ENCODE measurements at regions of chr12 and their contacts with region 1.

Region 1: GRCh38 chr12:3041558-3042164 is 35.5 kb upstream of the TSPAN9 start:
- DNase-seq: no peak
- ATAC-seq: peak; percentile 70
- H3K4me3 Mint-ChIP-seq: peak overlapping the region; percentile 46
- H3K27ac Mint-ChIP-seq: peak overlapping the region; percentile 30
- H3K4me1 Mint-ChIP-seq: peaks cover 25% of the 10 kb centered on the region
- H3K27me3 Mint-ChIP-seq: peaks cover 28% of the 10 kb centered on the region
- CTCF ChIP-seq: no peak

Region 2: DNA sequence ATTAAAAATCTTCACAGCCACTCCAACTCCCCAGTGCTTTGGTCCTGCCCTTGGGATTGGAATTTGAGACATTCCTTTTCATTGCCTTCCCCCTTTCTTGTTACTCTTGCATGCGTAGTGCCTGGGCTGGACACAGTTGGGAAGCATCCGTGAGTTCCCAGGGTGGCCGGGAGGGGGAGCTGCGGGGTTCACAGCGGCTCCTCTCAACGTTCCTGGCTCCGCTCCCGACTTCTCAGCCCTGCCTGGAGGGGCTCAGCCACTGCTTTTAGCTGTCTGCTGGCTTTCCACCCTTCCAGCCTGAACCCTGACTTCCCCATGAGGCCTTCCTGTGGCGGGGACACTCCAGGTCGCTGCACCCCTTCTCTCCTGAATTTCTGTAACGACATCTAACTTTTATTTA is 188.0 kb before region 1 on chr12:
- CTCF ChIA-PET with region 1: interaction called, 8 read pairs
- POLR2A ChIA-PET with region 1: no interaction called
- intact Hi-C with region 1: loop called (anchors 2 kb)
- DNase-seq: peak; percentile 28
- ATAC-seq: peak; percentile 45
- H3K4me3 Mint-ChIP-seq: no peak overlapping the region
- H3K27ac Mint-ChIP-seq: no peak overlapping the region
- H3K4me1 Mint-ChIP-seq: peaks cover 2% of the 10 kb centered on the region
- H3K27me3 Mint-ChIP-seq: no peaks in the 10 kb centered on the region
- CTCF ChIP-seq: no peak

Region 3: GRCh38 chr12:2884810-2885209 is 156.9 kb before region 1 on chr12:
- CTCF ChIA-PET with region 1: interaction called, 4 read pairs
- POLR2A ChIA-PET with region 1: interaction called, 3 read pairs
- intact Hi-C with region 1: loop called (anchors 2 kb)
- DNase-seq: no peak
- ATAC-seq: no peak
- H3K4me3 Mint-ChIP-seq: no peak overlapping the region
- H3K27ac Mint-ChIP-seq: peak overlapping the region; percentile 77
- H3K4me1 Mint-ChIP-seq: peaks cover 18% of the 10 kb centered on the region
- H3K27me3 Mint-ChIP-seq: no peaks in the 10 kb centered on the region
- CTCF ChIP-seq: no peak